Activated T-helper 1 cell treated with anti-CD3 and anti-CD28 coated beads, Interleukin-12 subunit alpha, Interleukin-12 subunit beta, Interleukin-2, Interleukin-4 antibody, amounts not matched to agents 30 ng/mL and 10 ng/mL and 1 ng/mL, durations not matched to agents 14 hours and 24 hours and 36 hours (primary cell): ENCODE measurements at regions of chr20 and their contacts with region 1.

Region 1: DNA sequence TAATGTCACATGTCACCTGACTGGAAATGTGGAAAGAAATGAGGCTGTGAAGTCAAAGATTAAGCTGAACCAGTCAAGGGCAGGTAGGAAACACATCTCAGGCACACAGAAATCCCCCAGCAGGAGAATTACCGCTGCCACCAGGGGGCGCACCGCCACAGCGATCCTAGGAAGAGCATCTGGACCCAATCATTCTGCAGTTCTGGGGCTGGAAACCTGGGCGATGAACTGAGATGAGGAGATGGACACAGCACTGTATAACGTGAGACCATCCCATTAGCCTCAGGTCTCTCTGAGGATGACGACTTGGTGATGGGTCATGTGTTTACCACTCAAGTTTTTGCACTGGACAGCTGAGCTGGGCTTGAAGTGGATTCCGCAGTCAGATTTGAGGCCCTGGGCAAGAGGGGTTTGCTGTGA is 6.5 kb upstream of the SLC24A3 start:
- DNase-seq: peak; percentile 32
- H3K4me3 Mint-ChIP-seq: no peak overlapping the region
- H3K27ac Mint-ChIP-seq: no peak overlapping the region
- H3K4me1 Mint-ChIP-seq: no peaks in the 10 kb centered on the region
- H3K27me3 Mint-ChIP-seq: peaks cover 11% of the 10 kb centered on the region

Region 2: GRCh38 chr20:18481596-18481995 is 724.4 kb before region 1 on chr20:
- intact Hi-C with region 1: no loop called
- DNase-seq: no peak
- H3K4me3 Mint-ChIP-seq: no peak overlapping the region
- H3K27ac Mint-ChIP-seq: no peak overlapping the region
- H3K4me1 Mint-ChIP-seq: no peaks in the 10 kb centered on the region
- H3K27me3 Mint-ChIP-seq: no peaks in the 10 kb centered on the region

Region 3: GRCh38 chr20:18632196-18633009 is 573.6 kb before region 1 on chr20:
- intact Hi-C with region 1: loop called (anchors 10 kb)
- DNase-seq: peak; percentile 19
- H3K4me3 Mint-ChIP-seq: no peak overlapping the region
- H3K27ac Mint-ChIP-seq: no peak overlapping the region
- H3K4me1 Mint-ChIP-seq: no peaks in the 10 kb centered on the region
- H3K27me3 Mint-ChIP-seq: no peaks in the 10 kb centered on the region